ENCODE measurements at regions of chr14 and their contacts with region 1.

Region 1: GRCh38 chr14:102096214-102097114 is 9.6 kb upstream of the HSP90AA1 start:
- DNase-seq: no peak
- ATAC-seq: peak; percentile 88
- H3K4me3 ChIP-seq: no peak overlapping the region
- H3K27ac ChIP-seq: no peak overlapping the region
- H3K4me1 ChIP-seq: no peaks in the 10 kb centered on the region; the same call in 1 of the 2 replicates
- H3K27me3 ChIP-seq: no peaks in the 10 kb centered on the region
- CTCF ChIP-seq: peak; percentile 78 to 92 (median 88)
- EP300 ChIP-seq: no peak
- POLR2A ChIP-seq: no peak
- RAD21 ChIP-seq: peak; percentile 90

Region 2: DNA sequence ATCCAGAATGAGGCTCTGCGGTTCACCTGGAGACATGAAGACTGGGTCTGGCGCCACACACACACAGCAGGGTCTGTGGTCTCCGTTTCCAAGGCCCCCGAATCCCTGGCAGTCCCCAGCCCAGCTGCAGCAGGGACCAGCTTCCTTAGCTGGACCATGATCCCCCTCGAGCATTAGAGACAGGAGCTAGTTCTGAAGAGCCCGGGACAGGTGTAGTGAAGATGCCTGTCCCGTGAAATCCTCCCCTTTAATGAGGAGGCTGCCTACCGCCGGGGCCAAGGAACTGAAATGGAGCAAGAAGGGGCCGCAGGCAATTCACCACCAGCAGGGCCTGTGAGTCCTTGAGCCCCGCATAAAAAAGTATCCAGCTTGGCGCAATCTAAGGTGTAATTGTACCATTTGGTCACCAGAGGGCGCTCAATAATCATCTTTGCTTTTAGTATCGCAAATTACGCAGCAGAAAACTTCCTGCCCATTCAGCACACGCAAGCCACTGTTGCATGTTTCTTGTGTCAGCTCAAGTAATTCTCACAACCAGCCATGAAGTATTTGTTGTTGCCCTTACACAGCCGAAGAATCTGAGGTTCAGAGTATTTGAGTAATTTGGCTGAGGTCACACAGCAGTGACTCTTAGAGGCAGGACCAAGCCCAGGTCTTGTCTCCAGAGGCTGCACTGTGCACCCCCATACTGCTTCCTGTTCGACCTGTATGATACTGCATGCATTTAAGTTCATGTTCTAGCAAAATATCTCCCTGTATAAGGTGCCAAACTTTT is 389.2 kb before region 1 on chr14:
- CTCF ChIA-PET with region 1: interaction called, 12 read pairs
- POLR2A ChIA-PET with region 1: no interaction called
- RAD21 ChIA-PET with region 1: interaction called, 10 read pairs
- SMC1A ChIA-PET with region 1: interaction called, 8 read pairs
- in situ Hi-C with region 1: no loop called
- intact Hi-C with region 1: no loop called
- DNase-seq: peak; percentile 53
- ATAC-seq: peak; percentile 78
- H3K4me3 ChIP-seq: no peak overlapping the region
- H3K27ac ChIP-seq: no peak overlapping the region
- H3K4me1 ChIP-seq: peaks cover 14% of the 10 kb centered on the region
- H3K27me3 ChIP-seq: no peaks in the 10 kb centered on the region; a peak in 2 of 4 replicates
- CTCF ChIP-seq: peak; percentile 65 to 87 (median 80)
- EP300 ChIP-seq: no peak
- POLR2A ChIP-seq: no peak
- RAD21 ChIP-seq: peak; percentile 92

Region 3: DNA sequence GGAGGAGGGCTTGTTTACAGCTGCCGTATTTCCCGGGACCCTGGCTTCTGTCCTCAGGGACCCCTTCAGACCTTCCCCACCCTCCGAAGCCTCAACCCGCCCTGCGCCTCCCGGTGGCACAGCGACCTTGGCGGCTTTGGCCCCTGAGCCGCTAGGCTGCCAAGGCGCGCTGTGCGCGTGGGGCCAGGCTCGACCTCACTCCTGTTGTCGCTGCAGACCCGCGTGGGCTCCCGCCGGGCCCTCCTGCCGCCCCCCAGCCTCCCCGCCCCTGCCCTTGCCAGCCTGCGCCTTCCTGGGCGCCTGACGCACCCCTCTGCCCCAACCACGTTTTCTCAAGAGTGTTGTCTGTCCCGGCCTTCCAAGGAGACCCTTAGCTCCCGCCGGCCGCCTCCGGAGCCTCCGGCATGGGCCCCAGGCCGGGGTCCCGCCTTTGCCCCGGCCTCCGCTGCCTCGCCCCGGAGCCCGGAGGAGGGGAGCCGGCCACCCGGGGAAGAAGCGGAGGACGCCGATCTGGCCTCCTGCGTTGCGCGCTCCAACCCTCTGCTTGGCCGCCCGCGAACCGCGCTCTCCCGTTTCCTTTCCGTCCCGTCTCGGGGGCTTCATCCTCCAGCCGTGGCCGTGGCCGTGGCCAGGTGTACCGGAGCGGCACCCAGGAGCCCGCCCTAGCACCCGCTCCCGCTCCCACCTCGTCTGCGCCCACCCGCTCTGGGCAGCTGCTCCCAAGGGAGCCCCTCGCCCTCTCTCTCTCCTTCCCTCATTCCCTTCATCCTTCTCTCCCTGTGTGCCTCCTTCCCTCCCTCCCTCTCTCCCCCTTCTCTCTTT is 315.0 kb before region 1 on chr14:
- CTCF ChIA-PET with region 1: no interaction called
- POLR2A ChIA-PET with region 1: no interaction called
- RAD21 ChIA-PET with region 1: no interaction called
- SMC1A ChIA-PET with region 1: no interaction called
- in situ Hi-C with region 1: no loop called
- intact Hi-C with region 1: no loop called
- DNase-seq: no peak
- ATAC-seq: peak; percentile 69
- H3K4me3 ChIP-seq: peak overlapping the region; percentile 50; the same call in 1 of the 2 replicates
- H3K27ac ChIP-seq: no peak overlapping the region
- H3K4me1 ChIP-seq: peaks cover 6% of the 10 kb centered on the region
- H3K27me3 ChIP-seq: peaks cover 4% of the 10 kb centered on the region in 2 experiments; a peak in 2 of 4 replicates
- CTCF ChIP-seq: no peak
- EP300 ChIP-seq: no peak
- POLR2A ChIP-seq: no peak
- RAD21 ChIP-seq: no peak

Region 4: DNA sequence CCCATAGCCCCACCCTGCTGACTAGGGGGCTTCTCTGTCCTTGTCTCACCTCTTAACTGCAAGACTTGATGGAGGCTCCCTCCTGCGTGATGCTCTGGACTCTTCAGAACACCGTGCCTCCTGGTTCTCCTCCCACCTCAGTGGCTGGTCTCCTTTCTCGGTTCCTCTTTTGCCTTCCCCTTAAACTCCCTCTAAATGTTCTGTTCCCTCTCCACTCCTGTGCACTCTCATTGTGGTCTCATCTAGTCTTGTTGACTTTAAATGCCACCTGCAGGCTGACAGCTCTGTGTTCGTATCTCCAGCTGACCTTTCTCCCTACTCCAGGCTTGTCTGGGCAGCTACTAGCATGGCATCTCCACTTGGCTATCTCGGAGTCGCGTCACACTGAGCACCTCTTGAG is 103.8 kb before region 1 on chr14:
- CTCF ChIA-PET with region 1: interaction called, 13 read pairs
- POLR2A ChIA-PET with region 1: no interaction called
- RAD21 ChIA-PET with region 1: interaction called, 5 read pairs
- SMC1A ChIA-PET with region 1: interaction called, 5 read pairs
- in situ Hi-C with region 1: no loop called
- intact Hi-C with region 1: no loop called
- DNase-seq: peak; percentile 84
- ATAC-seq: peak; percentile 97
- H3K4me3 ChIP-seq: peak overlapping the region; percentile 37; the same call in 1 of the 2 replicates
- H3K27ac ChIP-seq: peak overlapping the region; percentile 29; the same call in 1 of the 2 replicates
- H3K4me1 ChIP-seq: peaks cover 29% of the 10 kb centered on the region
- H3K27me3 ChIP-seq: no peaks in the 10 kb centered on the region
- CTCF ChIP-seq: peak; percentile 24 to 61 (median 38); a peak in 4 of 6 replicates
- EP300 ChIP-seq: peak; percentile 43 to 86; a peak in 3 of 4 replicates
- POLR2A ChIP-seq: peak; percentile 44; the same call in 1 of the 2 replicates
- RAD21 ChIP-seq: peak; percentile 63

Region 5: GRCh38 chr14:102008891-102009290 is 87.6 kb before region 1 on chr14:
- CTCF ChIA-PET with region 1: no interaction called
- POLR2A ChIA-PET with region 1: no interaction called
- RAD21 ChIA-PET with region 1: no interaction called
- SMC1A ChIA-PET with region 1: no interaction called
- in situ Hi-C with region 1: no loop called
- intact Hi-C with region 1: no loop called
- DNase-seq: no peak
- ATAC-seq: no peak
- H3K4me3 ChIP-seq: no peak overlapping the region
- H3K27ac ChIP-seq: no peak overlapping the region
- H3K4me1 ChIP-seq: no peaks in the 10 kb centered on the region
- H3K27me3 ChIP-seq: no peaks in the 10 kb centered on the region
- CTCF ChIP-seq: no peak
- EP300 ChIP-seq: no peak
- POLR2A ChIP-seq: no peak
- RAD21 ChIP-seq: no peak

Region 6: GRCh38 chr14:102046343-102047278 is 49.9 kb before region 1 on chr14:
- CTCF ChIA-PET with region 1: interaction called, 13 read pairs
- POLR2A ChIA-PET with region 1: no interaction called
- RAD21 ChIA-PET with region 1: interaction called, 7 read pairs
- SMC1A ChIA-PET with region 1: interaction called, 8 read pairs
- in situ Hi-C with region 1: no loop called
- intact Hi-C with region 1: no loop called
- DNase-seq: no peak
- ATAC-seq: peak; percentile 83
- H3K4me3 ChIP-seq: no peak overlapping the region
- H3K27ac ChIP-seq: no peak overlapping the region
- H3K4me1 ChIP-seq: no peaks in the 10 kb centered on the region
- H3K27me3 ChIP-seq: no peaks in the 10 kb centered on the region
- CTCF ChIP-seq: peak; percentile 14 to 41 (median 37); a peak in 4 of 6 replicates
- EP300 ChIP-seq: no peak
- POLR2A ChIP-seq: no peak; the same call in 1 of the 2 replicates
- RAD21 ChIP-seq: peak; percentile 33; the same call in 1 of the 2 replicates

Region 7: GRCh38 chr14:102063091-102063802 is 33.2 kb before region 1 on chr14:
- CTCF ChIA-PET with region 1: interaction called, 19 read pairs
- POLR2A ChIA-PET with region 1: interaction called, 3 read pairs
- RAD21 ChIA-PET with region 1: interaction called, 10 read pairs
- SMC1A ChIA-PET with region 1: interaction called, 9 read pairs
- in situ Hi-C with region 1: no loop called
- intact Hi-C with region 1: loop called (anchors 2 kb)
- DNase-seq: peak; percentile 31
- ATAC-seq: peak; percentile 98
- H3K4me3 ChIP-seq: no peak overlapping the region
- H3K27ac ChIP-seq: no peak overlapping the region
- H3K4me1 ChIP-seq: no peaks in the 10 kb centered on the region
- H3K27me3 ChIP-seq: no peaks in the 10 kb centered on the region
- CTCF ChIP-seq: peak; percentile 28 to 48 (median 37); a peak in 4 of 6 replicates
- EP300 ChIP-seq: no peak
- POLR2A ChIP-seq: no peak
- RAD21 ChIP-seq: peak; percentile 45

Measured in GM12878 (cell line).